ENCODE measurements at regions of chrX and their contacts with region 1.

Region 1: GRCh38 chrX:13721819-13722519 is 12.5 kb downstream of the TRAPPC2 start:
- DNase-seq: no peak
- ATAC-seq: peak; percentile 14
- H3K4me3 Mint-ChIP-seq: no peak overlapping the region
- H3K27ac Mint-ChIP-seq: peak overlapping the region; percentile 41
- H3K4me1 Mint-ChIP-seq: peaks cover 21% of the 10 kb centered on the region
- H3K27me3 Mint-ChIP-seq: no peaks in the 10 kb centered on the region
- CTCF ChIP-seq: no peak

Region 2: GRCh38 chrX:13533726-13534125 is 188.2 kb before region 1 on chrX:
- CTCF ChIA-PET with region 1: no interaction called
- POLR2A ChIA-PET with region 1: interaction called, 10 read pairs
- intact Hi-C with region 1: no loop called
- DNase-seq: no peak
- ATAC-seq: no peak
- H3K4me3 Mint-ChIP-seq: no peak overlapping the region
- H3K27ac Mint-ChIP-seq: no peak overlapping the region
- H3K4me1 Mint-ChIP-seq: no peaks in the 10 kb centered on the region
- H3K27me3 Mint-ChIP-seq: no peaks in the 10 kb centered on the region
- CTCF ChIP-seq: no peak

Region 3: GRCh38 chrX:13699183-13699826 is 22.7 kb before region 1 on chrX:
- CTCF ChIA-PET with region 1: no interaction called
- POLR2A ChIA-PET with region 1: interaction called, 3 read pairs
- intact Hi-C with region 1: loop called (anchors 2 kb)
- DNase-seq: no peak
- ATAC-seq: peak; percentile 45
- H3K4me3 Mint-ChIP-seq: peak overlapping the region; percentile 64
- H3K27ac Mint-ChIP-seq: peak overlapping the region; percentile 83
- H3K4me1 Mint-ChIP-seq: peaks cover 84% of the 10 kb centered on the region
- H3K27me3 Mint-ChIP-seq: no peaks in the 10 kb centered on the region
- CTCF ChIP-seq: no peak

Region 4: GRCh38 chrX:13742397-13743176 is 20.6 kb after region 1 on chrX:
- CTCF ChIA-PET with region 1: no interaction called
- POLR2A ChIA-PET with region 1: no interaction called
- intact Hi-C with region 1: no loop called
- DNase-seq: peak; percentile 16
- ATAC-seq: peak; percentile 85
- H3K4me3 Mint-ChIP-seq: peak overlapping the region; percentile 82
- H3K27ac Mint-ChIP-seq: peak overlapping the region; percentile 94
- H3K4me1 Mint-ChIP-seq: peaks cover 38% of the 10 kb centered on the region
- H3K27me3 Mint-ChIP-seq: no peaks in the 10 kb centered on the region
- CTCF ChIP-seq: no peak

Region 5: GRCh38 chrX:13825178-13825762 is 103.3 kb after region 1 on chrX:
- CTCF ChIA-PET with region 1: no interaction called
- POLR2A ChIA-PET with region 1: no interaction called
- intact Hi-C with region 1: no loop called
- DNase-seq: no peak
- ATAC-seq: no peak
- H3K4me3 Mint-ChIP-seq: no peak overlapping the region
- H3K27ac Mint-ChIP-seq: no peak overlapping the region
- H3K4me1 Mint-ChIP-seq: no peaks in the 10 kb centered on the region
- H3K27me3 Mint-ChIP-seq: peaks cover 2% of the 10 kb centered on the region
- CTCF ChIP-seq: no peak